Activated CD4-positive, alpha-beta T cell treated with anti-CD3 and anti-CD28 coated beads, Interleukin-2, amount 10 ng/mL, durations not matched to agents 24 days and 14 days (primary cell): ENCODE measurements at regions of chr3 and their contacts with region 1.

Region 1: DNA sequence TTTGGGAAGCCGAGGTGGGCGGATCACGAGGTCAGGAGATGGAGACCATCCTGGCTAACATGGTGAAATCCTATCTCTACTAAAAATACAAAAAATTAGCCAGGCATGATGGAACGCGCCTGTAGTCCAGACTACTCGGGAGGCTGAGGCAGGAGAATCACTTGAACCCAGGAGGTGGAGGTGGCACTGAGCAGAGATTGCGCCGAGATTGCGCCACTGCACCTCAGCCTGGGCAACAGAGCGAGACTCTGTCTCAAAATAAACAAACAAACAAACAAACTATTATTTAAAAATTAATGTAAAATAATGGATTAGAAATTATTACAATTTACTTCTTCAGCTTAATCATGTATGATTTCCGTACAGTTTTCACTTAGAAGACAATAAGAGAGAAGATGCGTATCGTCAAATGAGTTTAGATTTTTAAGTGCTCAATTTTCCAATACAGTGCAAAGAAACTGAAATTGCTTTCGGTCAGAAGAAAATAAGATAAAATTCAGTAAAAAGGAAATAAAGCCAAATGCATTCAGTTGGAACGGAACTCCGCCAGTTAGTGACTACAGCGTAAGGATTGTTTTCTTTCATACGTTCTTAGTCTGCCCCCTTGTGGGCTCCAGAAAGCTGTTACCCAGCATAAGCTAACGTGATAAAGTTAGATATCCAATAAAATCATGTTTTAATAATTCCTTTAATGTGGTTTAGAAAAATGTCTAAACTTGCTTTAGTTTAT is 24.8 kb downstream of the AADAC start:
- DNase-seq: peak; percentile 81
- H3K4me3 Mint-ChIP-seq: no peak overlapping the region
- H3K27ac Mint-ChIP-seq: no peak overlapping the region
- H3K4me1 Mint-ChIP-seq: no peaks in the 10 kb centered on the region
- H3K27me3 Mint-ChIP-seq: peaks cover 26% of the 10 kb centered on the region

Region 2: DNA sequence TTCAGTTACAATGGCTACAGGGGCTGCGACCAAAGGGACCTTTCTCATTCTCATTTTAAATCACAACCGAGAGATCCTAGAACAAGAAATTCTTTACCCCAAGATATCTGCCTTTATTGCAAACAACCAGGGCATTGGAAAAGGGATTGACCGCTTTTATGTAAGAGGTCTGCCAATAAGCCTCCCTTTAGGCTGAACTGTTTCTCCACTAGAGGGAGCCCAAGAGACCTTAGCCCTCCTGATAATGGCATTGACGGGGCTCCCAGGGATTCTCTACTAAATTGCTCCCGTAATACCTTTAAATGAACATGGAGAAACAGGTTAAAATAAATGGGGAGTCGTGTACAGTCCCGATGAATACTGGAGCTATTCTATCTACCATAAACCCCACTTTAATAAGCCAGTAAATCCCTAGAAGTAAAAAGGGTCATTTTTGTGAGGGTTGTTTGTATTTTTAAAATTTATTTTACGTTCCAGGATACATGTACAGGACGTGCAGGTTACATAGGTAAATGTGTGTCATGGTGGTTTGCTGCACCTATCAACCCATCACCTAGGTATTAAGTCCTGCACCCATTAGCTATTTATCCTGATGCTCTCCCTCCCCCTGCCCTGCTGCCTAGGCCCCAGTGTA is 370.3 kb before region 1 on chr3:
- intact Hi-C with region 1: loop called (anchors 2 kb)
- DNase-seq: peak; percentile 82
- H3K4me3 Mint-ChIP-seq: no peak overlapping the region
- H3K27ac Mint-ChIP-seq: no peak overlapping the region
- H3K4me1 Mint-ChIP-seq: no peaks in the 10 kb centered on the region
- H3K27me3 Mint-ChIP-seq: peaks cover 15% of the 10 kb centered on the region